ENCODE measurements at regions of chr3 and their contacts with region 1.

Region 1: DNA sequence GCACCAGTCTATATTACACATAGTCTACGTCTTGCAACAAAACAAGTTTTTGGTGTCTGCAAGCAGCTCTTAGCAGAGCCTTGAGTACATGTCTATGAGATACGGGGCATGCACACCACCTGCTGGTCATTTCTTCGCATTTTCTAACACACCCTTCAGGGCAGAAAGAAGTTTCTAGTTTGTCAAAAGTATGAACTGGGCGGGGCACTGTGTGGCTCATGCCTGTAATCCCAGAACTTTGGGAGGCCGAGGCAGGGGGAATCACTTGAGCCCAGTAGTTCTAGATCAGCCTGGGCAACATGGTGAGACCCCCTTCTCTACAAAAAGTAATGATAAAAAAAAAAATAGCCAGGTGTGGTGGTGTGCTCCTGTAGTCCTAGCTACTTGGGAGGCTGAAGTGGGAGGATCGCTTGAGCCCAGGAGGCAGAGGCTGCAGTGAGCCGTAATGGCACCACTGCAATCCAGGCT is 64.2 kb upstream of the ARL8B start:
- DNase-seq: peak; percentile 57 to 79
- ATAC-seq: peak; percentile 73 to 82
- H3K4me3 ChIP-seq: no peak overlapping the region
- H3K27ac ChIP-seq: no peak overlapping the region
- H3K4me1 ChIP-seq: peaks cover 27 to 35% of the 10 kb centered on the region in 2 donors
- H3K27me3 ChIP-seq: no peaks in the 10 kb centered on the region
- CTCF ChIP-seq: peak; percentile 75 to 85 (median 79)
- POLR2A ChIP-seq: no peak

Region 2: GRCh38 chr3:4656059-4656458 is 401.8 kb before region 1 on chr3:
- in situ Hi-C with region 1: no loop called
- intact Hi-C with region 1: loop called (anchors 1 kb)
- DNase-seq: peak; percentile 5 to 41
- ATAC-seq: peak; percentile 60 to 81
- H3K4me3 ChIP-seq: no peak overlapping the region
- H3K27ac ChIP-seq: no peak overlapping the region
- H3K4me1 ChIP-seq: peaks cover 0 to 6% of the 10 kb centered on the region in 2 donors
- H3K27me3 ChIP-seq: no peaks in the 10 kb centered on the region
- CTCF ChIP-seq: peak; percentile 59 to 77 (median 69)
- POLR2A ChIP-seq: no peak

Region 3: GRCh38 chr3:4807381-4808280 is 250.3 kb before region 1 on chr3:
- in situ Hi-C with region 1: no loop called
- intact Hi-C with region 1: loop called (anchors 5 kb)
- DNase-seq: peak; percentile 45 to 81
- ATAC-seq: peak; percentile 82 to 90
- H3K4me3 ChIP-seq: no peak overlapping the region
- H3K27ac ChIP-seq: peak overlapping the region; percentile 76 to 89 (median 80)
- H3K4me1 ChIP-seq: peaks cover 16 to 31% of the 10 kb centered on the region in 2 donors
- H3K27me3 ChIP-seq: no peaks in the 10 kb centered on the region
- CTCF ChIP-seq: peak in 4 of 5 experiments; percentile 25 to 46 (median 33)
- POLR2A ChIP-seq: peak; percentile 9 to 46

Region 4: GRCh38 chr3:4988931-4989834 is 68.7 kb before region 1 on chr3:
- in situ Hi-C with region 1: no loop called
- intact Hi-C with region 1: loop called (anchors 2 kb)
- DNase-seq: peak; percentile 95 to 97
- ATAC-seq: peak; percentile 63 to 73
- H3K4me3 ChIP-seq: no peak overlapping the region
- H3K27ac ChIP-seq: peak overlapping the region; percentile 96 to 100 (median 99)
- H3K4me1 ChIP-seq: peaks cover 48 to 67% of the 10 kb centered on the region in 2 donors
- H3K27me3 ChIP-seq: no peaks in the 10 kb centered on the region
- CTCF ChIP-seq: no peak
- POLR2A ChIP-seq: peak; percentile 70 to 72

Region 5: GRCh38 chr3:5194341-5195159 is 136.7 kb after region 1 on chr3:
- in situ Hi-C with region 1: no loop called
- intact Hi-C with region 1: loop called (anchors 5 kb)
- DNase-seq: peak; percentile 69 to 70
- ATAC-seq: peak; percentile 97 to 98
- H3K4me3 ChIP-seq: no peak overlapping the region
- H3K27ac ChIP-seq: peak overlapping the region; percentile 79 to 88 (median 82)
- H3K4me1 ChIP-seq: peaks cover 49 to 51% of the 10 kb centered on the region in 2 donors
- H3K27me3 ChIP-seq: no peaks in the 10 kb centered on the region
- CTCF ChIP-seq: no peak
- POLR2A ChIP-seq: peak in 1 of 2 donors; percentile 39

Measured in gastrocnemius medialis (tissue), 4 donors.